H1 (cell line): ENCODE measurements at regions of chr1 and their contacts with region 1.

Region 1: DNA sequence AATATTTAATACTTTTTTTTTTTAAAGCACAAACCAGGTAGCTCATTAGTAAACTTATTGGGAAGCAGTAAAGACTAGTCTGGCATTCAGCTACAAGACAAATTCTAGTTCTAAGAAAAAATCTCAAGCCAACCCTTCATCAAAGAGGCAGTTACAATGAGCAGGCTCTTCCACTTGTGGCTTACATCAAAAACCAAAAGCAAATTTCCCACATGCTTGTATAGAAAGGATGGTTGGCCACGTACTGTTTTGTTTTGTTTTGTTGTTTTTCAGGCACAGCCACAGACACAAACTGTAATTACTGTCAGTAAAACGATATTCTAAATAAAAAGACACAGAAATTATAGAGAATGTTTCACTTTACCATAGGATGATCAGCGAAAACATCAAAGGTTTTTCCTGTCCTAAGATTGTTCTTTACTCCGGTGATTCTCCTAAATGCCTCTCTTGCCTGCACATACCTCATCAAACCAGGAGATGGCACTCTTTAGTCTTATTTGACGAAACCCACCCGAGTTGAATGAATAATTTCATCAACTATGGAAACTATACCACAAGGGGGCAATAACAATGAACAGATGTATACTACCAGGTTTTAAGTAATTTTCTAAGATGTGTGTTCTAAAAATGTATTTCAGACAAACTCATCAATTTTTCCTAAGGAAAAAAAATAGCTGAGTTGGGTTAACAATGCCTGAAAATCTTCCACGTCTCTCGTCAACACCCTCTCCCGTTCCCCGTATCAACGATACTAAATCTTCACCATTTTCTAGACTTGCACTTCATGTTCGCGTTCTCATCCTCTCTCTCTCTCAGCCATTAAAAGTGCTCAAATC is 26.9 kb downstream of the RPL5 start:
- DNase-seq: no peak
- H3K4me3 ChIP-seq: no peak overlapping the region
- H3K27ac ChIP-seq: no peak overlapping the region
- H3K4me1 ChIP-seq: no peaks in the 10 kb centered on the region
- H3K27me3 ChIP-seq: no peaks in the 10 kb centered on the region
- CTCF ChIP-seq: peak in 2 of 3 experiments; percentile 88 to 98; a peak in 3 of 4 replicates
- EP300 ChIP-seq: no peak
- POLR2A ChIP-seq: no peak
- RAD21 ChIP-seq: peak; percentile 95 to 96

Region 2: GRCh38 chr1:92736395-92736794 is 122.4 kb before region 1 on chr1:
- CTCF ChIA-PET with region 1: no interaction called
- POLR2A ChIA-PET with region 1: no interaction called
- DNase-seq: no peak
- H3K4me3 ChIP-seq: no peak overlapping the region
- H3K27ac ChIP-seq: no peak overlapping the region
- H3K4me1 ChIP-seq: no peaks in the 10 kb centered on the region
- H3K27me3 ChIP-seq: no peaks in the 10 kb centered on the region
- CTCF ChIP-seq: peak in 2 of 3 experiments; percentile 32 to 43; a peak in 3 of 4 replicates
- EP300 ChIP-seq: no peak
- POLR2A ChIP-seq: no peak
- RAD21 ChIP-seq: peak; percentile 42 to 47

Region 3: GRCh38 chr1:92804721-92805169 is 54.0 kb before region 1 on chr1:
- CTCF ChIA-PET with region 1: no interaction called
- POLR2A ChIA-PET with region 1: no interaction called
- DNase-seq: no peak
- H3K4me3 ChIP-seq: no peak overlapping the region
- H3K27ac ChIP-seq: no peak overlapping the region
- H3K4me1 ChIP-seq: no peaks in the 10 kb centered on the region
- H3K27me3 ChIP-seq: no peaks in the 10 kb centered on the region
- CTCF ChIP-seq: no peak
- EP300 ChIP-seq: no peak
- POLR2A ChIP-seq: no peak
- RAD21 ChIP-seq: no peak

Region 4: DNA sequence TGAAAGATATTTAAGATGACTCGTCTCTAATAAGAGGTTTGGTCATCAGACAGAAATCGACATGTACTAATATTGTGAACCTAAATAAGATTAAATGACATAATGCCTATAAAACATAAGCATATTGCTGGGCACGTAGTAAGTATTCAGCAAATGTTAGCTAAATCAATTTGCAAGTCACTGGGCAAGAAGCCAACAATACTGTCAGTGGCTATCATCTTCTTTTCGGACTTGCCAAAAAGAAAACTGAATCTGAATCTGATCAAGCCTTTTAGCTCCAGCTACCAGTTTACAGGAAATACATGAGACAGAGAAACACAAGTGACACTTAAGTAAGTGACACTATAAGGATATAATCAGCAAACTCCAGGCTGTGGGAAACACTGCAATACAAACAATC is 19.0 kb after region 1 on chr1:
- CTCF ChIA-PET with region 1: interaction called, 21 read pairs
- POLR2A ChIA-PET with region 1: interaction called, 3 read pairs
- DNase-seq: no peak
- H3K4me3 ChIP-seq: no peak overlapping the region
- H3K27ac ChIP-seq: no peak overlapping the region
- H3K4me1 ChIP-seq: no peaks in the 10 kb centered on the region; a peak in 2 of 7 replicates
- H3K27me3 ChIP-seq: no peaks in the 10 kb centered on the region
- CTCF ChIP-seq: no peak
- EP300 ChIP-seq: no peak
- POLR2A ChIP-seq: no peak
- RAD21 ChIP-seq: no peak

Region 5: DNA sequence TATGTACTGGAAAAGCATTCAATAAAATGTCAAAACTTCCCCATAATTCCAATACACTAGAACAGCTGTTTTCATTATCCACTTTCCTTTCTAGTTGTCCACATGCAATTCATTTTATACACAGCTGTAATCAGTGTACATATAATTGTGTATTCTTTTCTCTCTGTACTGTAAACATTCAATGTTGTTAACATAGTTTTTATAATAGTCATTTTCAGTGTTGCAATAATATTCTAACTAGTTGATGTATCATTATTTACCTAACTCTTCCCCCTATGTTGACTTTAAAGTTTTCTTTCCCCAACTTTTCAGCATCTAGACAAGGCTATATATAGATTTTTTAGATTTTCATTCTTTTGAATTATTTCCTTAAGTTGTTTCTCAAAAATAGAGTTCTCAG is 58.1 kb after region 1 on chr1:
- CTCF ChIA-PET with region 1: no interaction called
- POLR2A ChIA-PET with region 1: no interaction called
- DNase-seq: no peak
- H3K4me3 ChIP-seq: no peak overlapping the region
- H3K27ac ChIP-seq: no peak overlapping the region
- H3K4me1 ChIP-seq: no peaks in the 10 kb centered on the region
- H3K27me3 ChIP-seq: no peaks in the 10 kb centered on the region
- CTCF ChIP-seq: no peak
- EP300 ChIP-seq: no peak
- POLR2A ChIP-seq: no peak
- RAD21 ChIP-seq: no peak

Region 6: DNA sequence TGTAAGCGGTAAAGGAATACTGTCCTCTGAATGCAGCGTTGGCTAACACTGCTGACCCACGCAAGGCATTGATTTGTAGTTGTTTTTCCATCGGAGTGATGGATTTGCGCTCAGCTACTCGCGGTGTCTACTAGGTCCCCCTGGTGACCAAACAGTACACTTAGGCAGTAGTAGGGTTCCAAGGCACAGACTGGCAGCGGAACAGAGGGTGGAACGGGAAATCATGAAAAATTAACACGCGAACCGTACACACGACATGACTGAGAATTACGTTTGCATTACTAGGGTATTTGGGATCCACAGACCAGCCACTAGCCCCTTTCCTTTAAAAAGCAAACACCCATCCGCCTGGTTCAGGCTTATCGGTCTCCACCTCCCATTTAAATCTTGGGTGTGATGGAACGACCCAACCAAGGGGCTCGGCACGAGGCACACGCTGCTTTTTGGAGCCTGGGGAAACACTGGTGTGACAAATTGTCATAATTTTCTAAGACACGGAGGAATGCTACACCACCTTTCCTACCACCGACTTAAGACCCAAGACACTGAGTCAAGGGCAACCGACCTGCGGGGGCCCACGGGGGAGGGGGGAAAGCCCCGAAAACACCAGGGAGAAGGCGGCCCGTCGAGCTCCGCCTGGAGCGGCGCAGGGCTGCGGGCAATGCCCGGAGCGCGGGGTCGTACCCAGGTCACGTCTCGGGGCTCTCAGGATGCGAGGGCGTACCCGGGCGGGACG is 101.8 kb after region 1 on chr1:
- CTCF ChIA-PET with region 1: interaction called, 61 read pairs
- POLR2A ChIA-PET with region 1: no interaction called
- DNase-seq: no peak
- H3K4me3 ChIP-seq: peak overlapping the region; percentile 55 to 81 (median 63)
- H3K27ac ChIP-seq: no peak overlapping the region
- H3K4me1 ChIP-seq: peaks cover 0 to 4% (median 1%) of the 10 kb centered on the region in 4 experiments; a peak in 4 of 7 replicates
- H3K27me3 ChIP-seq: peaks cover 0 to 7% (median 2%) of the 10 kb centered on the region in 4 experiments; a peak in 4 of 7 replicates
- CTCF ChIP-seq: peak; percentile 57 to 69 (median 59)
- EP300 ChIP-seq: no peak
- POLR2A ChIP-seq: no peak
- RAD21 ChIP-seq: peak; percentile 55 to 65

Region 7: GRCh38 chr1:93000751-93001175 is 142.0 kb after region 1 on chr1:
- CTCF ChIA-PET with region 1: interaction called, 19 read pairs
- POLR2A ChIA-PET with region 1: no interaction called
- DNase-seq: no peak
- H3K4me3 ChIP-seq: peak overlapping the region in 1 of 4 experiments; percentile 20; a peak in 1 of 8 replicates
- H3K27ac ChIP-seq: no peak overlapping the region
- H3K4me1 ChIP-seq: peaks cover 0 to 8% (median 5%) of the 10 kb centered on the region in 4 experiments; a peak in 3 of 7 replicates
- H3K27me3 ChIP-seq: no peaks in the 10 kb centered on the region
- CTCF ChIP-seq: no peak
- EP300 ChIP-seq: no peak
- POLR2A ChIP-seq: no peak
- RAD21 ChIP-seq: no peak

Region 8: GRCh38 chr1:93021539-93022134 is 162.9 kb after region 1 on chr1:
- CTCF ChIA-PET with region 1: interaction called, 10 read pairs
- POLR2A ChIA-PET with region 1: no interaction called
- DNase-seq: no peak
- H3K4me3 ChIP-seq: no peak overlapping the region
- H3K27ac ChIP-seq: no peak overlapping the region
- H3K4me1 ChIP-seq: no peaks in the 10 kb centered on the region; a peak in 1 of 7 replicates
- H3K27me3 ChIP-seq: no peaks in the 10 kb centered on the region
- CTCF ChIP-seq: peak in 2 of 3 experiments; percentile 55 to 71; a peak in 2 of 4 replicates
- EP300 ChIP-seq: no peak
- POLR2A ChIP-seq: no peak
- RAD21 ChIP-seq: peak; percentile 82 to 84

Region 9: DNA sequence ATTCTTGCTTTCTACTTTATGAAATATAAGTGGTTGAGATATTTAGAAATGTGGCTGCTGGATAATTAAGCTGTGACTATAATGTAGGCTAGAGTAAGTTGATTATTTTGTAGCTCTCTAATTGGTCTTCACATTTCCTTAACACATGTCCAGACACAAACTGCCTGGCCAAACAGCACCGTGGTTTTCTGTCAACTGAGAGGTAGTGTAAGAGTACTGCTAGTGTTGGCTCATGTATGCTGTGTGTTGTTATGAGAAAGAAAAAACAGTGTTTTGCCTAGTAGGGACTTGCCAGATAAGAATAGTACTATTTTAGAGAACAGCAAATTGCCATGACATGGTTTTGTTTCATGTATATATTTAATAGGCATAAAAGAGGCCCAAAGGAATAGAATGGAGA is 284.4 kb after region 1 on chr1:
- CTCF ChIA-PET with region 1: no interaction called
- POLR2A ChIA-PET with region 1: no interaction called
- DNase-seq: no peak
- H3K4me3 ChIP-seq: no peak overlapping the region
- H3K27ac ChIP-seq: no peak overlapping the region
- H3K4me1 ChIP-seq: no peaks in the 10 kb centered on the region
- H3K27me3 ChIP-seq: no peaks in the 10 kb centered on the region
- CTCF ChIP-seq: no peak
- EP300 ChIP-seq: no peak
- POLR2A ChIP-seq: no peak
- RAD21 ChIP-seq: no peak